CD8-positive, alpha-beta T cell (primary cell): ENCODE measurements at regions of chr10 and their contacts with region 1.

Region 1: DNA sequence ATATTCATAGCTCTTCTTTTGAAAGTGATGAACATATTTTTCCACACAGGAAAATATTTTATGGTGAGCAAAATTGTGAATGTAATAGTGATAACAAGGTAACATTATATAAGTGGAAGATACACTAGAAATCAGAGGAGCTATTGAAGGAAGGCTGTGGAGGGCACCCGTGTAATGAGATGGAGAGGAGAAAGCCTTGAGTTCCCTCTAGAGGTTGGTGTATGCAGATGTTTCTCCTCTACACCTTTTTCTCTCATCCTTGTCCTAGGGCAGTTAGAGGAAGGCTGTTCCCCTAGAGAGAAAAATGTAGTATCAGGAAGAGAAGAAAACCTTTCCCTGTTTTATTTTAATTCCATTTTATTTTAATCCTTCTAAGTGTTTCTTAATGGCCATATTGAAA is 54.6 kb upstream of the NRG3 start:
- DNase-seq: peak in 1 of 9 experiments; percentile 29
- ATAC-seq: no peak
- H3K4me3 ChIP-seq: no peak overlapping the region
- H3K4me3 Mint-ChIP-seq: no peak overlapping the region
- H3K27ac ChIP-seq: no peak overlapping the region
- H3K27ac Mint-ChIP-seq: no peak overlapping the region
- H3K4me1 ChIP-seq: no peaks in the 10 kb centered on the region
- H3K4me1 Mint-ChIP-seq: no peaks in the 10 kb centered on the region
- H3K27me3 ChIP-seq: no peaks in the 10 kb centered on the region
- H3K27me3 Mint-ChIP-seq: no peaks in the 10 kb centered on the region
- CTCF ChIP-seq: no peak

Region 2: GRCh38 chr10:80389809-80390208 is 1430.6 kb before region 1 on chr10:
- CTCF ChIA-PET with region 1: no interaction called
- POLR2A ChIA-PET with region 1: no interaction called
- intact Hi-C with region 1: loop called in 1 of 2 experiments (anchors 5 kb)
- DNase-seq: no peak
- ATAC-seq: no peak
- H3K4me3 ChIP-seq: no peak overlapping the region
- H3K4me3 Mint-ChIP-seq: no peak overlapping the region
- H3K27ac ChIP-seq: no peak overlapping the region
- H3K27ac Mint-ChIP-seq: no peak overlapping the region
- H3K4me1 ChIP-seq: no peaks in the 10 kb centered on the region
- H3K4me1 Mint-ChIP-seq: no peaks in the 10 kb centered on the region
- H3K27me3 ChIP-seq: peaks cover 0 to 2% of the 10 kb centered on the region in 2 experiments
- H3K27me3 Mint-ChIP-seq: peaks cover 2% of the 10 kb centered on the region
- CTCF ChIP-seq: no peak